Natural killer cell (primary cell): ENCODE measurements at regions of chr2 and their contacts with region 1.

Region 1: DNA sequence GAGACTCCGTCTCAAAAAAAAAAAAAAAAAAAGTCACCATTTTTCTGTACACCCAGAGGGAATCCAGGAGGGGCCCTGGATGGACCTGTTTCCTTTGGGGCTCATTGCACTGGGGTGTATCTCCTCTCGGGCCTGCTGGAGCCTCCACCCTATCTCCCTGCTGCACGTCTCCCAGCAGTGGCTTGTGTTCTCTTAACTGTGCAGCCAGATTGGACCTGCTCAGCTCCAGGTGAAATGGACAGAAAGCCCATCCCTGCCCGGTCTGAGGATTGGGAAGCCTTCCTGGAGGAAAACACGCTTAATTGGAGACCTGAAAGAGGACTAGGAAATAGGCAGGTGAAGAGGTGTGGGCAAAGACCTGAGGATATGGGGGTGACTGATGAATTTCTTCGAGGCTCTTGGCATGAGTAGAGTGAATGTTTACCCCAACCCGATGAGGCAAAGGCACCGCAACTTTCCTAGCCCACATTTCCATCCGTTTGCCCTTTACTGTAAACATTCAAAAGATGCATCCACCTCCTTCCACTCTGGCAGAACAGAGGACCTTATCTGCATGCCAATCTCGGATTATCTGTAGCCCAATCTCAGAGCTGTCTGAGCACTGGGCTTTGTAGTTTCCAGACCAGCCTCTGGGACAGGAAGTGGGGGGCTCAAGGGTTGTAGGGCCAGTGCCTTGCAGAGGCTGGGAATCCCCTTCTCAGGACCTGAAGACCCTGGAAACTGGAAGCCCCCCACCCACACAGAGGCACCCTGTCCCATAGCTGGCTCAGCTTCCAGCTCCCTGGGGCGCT is 2.6 kb upstream of the ZAP70 start:
- DNase-seq: peak in 1 of 2 donors; percentile 45
- ATAC-seq: no peak
- H3K4me3 ChIP-seq: no peak overlapping the region
- H3K4me3 Mint-ChIP-seq: no peak overlapping the region
- H3K27ac ChIP-seq: no peak overlapping the region
- H3K27ac Mint-ChIP-seq: peak overlapping the region in 1 of 2 donors; percentile 97
- H3K4me1 ChIP-seq: peaks cover 53% of the 10 kb centered on the region
- H3K4me1 Mint-ChIP-seq: peaks cover 50 to 61% of the 10 kb centered on the region in 2 donors
- H3K27me3 ChIP-seq: no peaks in the 10 kb centered on the region
- H3K27me3 Mint-ChIP-seq: no peaks in the 10 kb centered on the region
- CTCF ChIP-seq: no peak

Region 2: DNA sequence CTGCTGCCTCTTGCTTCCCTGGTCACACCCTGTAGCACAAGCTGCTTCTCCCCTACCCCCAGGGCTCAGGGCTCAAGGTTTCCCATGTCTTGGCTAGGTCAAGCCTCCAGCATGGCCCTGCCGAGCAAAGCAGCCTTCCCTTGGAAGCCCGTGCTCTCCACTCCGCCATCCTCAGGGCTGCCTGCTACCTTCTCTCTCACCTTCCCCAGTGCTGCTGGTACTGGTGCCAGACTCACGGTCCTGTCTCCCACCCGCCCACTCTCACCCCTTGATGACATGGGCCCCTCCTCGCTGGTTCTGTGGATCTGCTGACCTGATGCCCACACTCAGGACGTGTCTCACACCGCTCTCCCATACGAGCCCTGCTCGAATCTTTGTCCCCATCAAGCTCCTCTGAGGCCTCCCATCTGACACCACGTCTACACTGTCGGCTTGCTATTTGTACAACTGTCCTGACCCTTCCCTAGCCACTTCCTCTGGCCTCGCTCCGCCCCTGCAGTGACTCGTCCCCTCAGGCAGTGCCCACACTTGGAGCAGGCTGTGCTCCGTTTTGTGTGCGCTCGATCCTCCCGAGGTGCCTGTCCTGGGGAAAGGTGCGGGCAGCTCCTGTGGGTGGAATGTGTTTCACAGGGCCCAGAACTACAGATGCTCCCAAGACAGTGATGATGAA is 52.5 kb after region 1 on chr2:
- intact Hi-C with region 1: loop called (anchors 1 kb)
- DNase-seq: no peak
- ATAC-seq: no peak
- H3K4me3 ChIP-seq: no peak overlapping the region
- H3K4me3 Mint-ChIP-seq: peak overlapping the region; percentile 60
- H3K27ac ChIP-seq: peak overlapping the region; percentile 11
- H3K27ac Mint-ChIP-seq: peak overlapping the region; percentile 84 to 87
- H3K4me1 ChIP-seq: peaks cover 40% of the 10 kb centered on the region
- H3K4me1 Mint-ChIP-seq: peaks cover 37 to 45% of the 10 kb centered on the region in 2 donors
- H3K27me3 ChIP-seq: no peaks in the 10 kb centered on the region
- H3K27me3 Mint-ChIP-seq: no peaks in the 10 kb centered on the region
- CTCF ChIP-seq: no peak